Ascending aorta (tissue), 2 donors: ENCODE measurements at regions of chr1 and their contacts with region 1.

Region 1: DNA sequence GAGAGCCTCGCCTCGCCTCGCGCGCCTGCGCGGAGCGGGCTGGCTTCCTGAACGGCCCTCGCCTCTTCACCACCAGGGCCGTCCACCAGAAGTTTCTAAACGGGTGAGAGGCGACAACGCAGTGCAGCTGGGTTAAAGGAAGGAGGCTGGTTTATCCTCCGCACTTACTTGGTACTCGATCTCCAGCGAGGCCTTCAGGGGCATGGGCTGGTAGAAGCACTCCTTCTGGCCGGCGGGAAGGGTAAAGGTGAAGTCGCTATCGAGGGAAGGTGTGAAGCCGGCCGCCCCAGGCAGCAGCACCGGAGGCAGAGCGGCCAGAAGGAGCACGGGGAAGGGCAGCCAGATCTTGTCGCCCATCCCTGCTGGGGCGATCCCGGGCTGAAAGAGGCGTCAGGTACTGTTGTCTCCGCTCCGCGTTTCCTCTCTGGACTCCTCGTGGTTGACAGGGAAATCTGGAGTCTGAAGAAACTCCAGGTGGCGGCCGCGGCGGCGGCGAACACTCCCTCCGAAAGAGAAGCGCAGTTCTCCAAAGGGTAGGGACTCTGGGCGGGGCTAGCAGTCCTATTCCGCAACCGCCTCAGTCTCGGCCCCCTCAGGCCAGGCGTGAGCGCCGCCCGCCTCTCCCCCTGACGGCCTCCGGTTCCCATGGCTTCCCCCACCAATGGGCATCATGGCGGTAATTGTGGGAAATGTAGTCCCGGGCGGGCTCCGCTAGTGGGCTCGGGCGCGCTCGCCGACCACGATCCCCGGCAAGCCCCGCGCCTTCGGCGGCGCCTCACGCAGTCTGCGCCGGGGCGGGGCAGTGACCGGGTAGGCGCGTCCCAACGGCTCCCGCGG is at the start of gene TMED5:
- DNase-seq: peak; percentile 97 to 99
- H3K4me3 ChIP-seq: peak within 1 kb of the TSS; percentile 96
- H3K27ac ChIP-seq: peak within 1 kb of the TSS; percentile 100
- H3K4me1 ChIP-seq: peaks cover 0 to 16% of the 10 kb centered on the region in 2 donors
- H3K27me3 ChIP-seq: no peaks in the 10 kb centered on the region
- CTCF ChIP-seq: peak; percentile 2 to 22 (median 12)
- total RNA-seq, gene TMED5: 39.1 TPM

Region 2: GRCh38 chr1:92831762-92832536 is 348.2 kb before region 1 on chr1 and contains the start of gene RPL5:
- intact Hi-C with region 1: loop called (anchors 10 kb)
- DNase-seq: peak; percentile 81 to 98
- H3K4me3 ChIP-seq: peak within 1 kb of the TSS; percentile 80
- H3K27ac ChIP-seq: peak within 1 kb of the TSS; percentile 85 to 90
- H3K4me1 ChIP-seq: peaks cover 12 to 16% of the 10 kb centered on the region in 2 donors
- H3K27me3 ChIP-seq: no peaks in the 10 kb centered on the region
- CTCF ChIP-seq: peak; percentile 74 to 95 (median 92)
- total RNA-seq, gene RPL5: 617 TPM

Region 3: GRCh38 chr1:93021539-93022134 is 158.5 kb before region 1 on chr1:
- intact Hi-C with region 1: loop called (anchors 10 kb)
- DNase-seq: no peak
- H3K4me3 ChIP-seq: no peak overlapping the region
- H3K27ac ChIP-seq: no peak overlapping the region
- H3K4me1 ChIP-seq: no peaks in the 10 kb centered on the region
- H3K27me3 ChIP-seq: no peaks in the 10 kb centered on the region
- CTCF ChIP-seq: peak; percentile 47 to 63 (median 60)

Region 4: DNA sequence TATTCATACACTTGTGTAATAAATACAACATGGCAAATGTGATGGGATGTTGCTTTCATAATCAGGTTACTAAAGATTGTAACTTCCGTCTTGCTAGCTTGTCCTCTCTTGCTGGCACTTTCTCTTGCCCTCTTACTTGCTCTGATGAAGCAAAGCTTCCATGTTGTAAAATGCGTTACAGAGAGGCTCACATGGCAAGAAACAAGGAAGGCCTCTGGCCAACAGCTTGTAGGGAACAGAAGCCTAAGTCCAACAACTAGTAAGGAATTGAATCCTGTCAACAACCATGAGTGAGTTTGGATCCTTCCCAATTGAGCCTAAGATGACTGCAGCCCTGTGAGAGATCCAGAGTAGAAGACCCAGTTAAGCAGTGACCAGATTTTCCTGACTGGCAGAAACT is 15.3 kb before region 1 on chr1:
- intact Hi-C with region 1: no loop called
- DNase-seq: no peak
- H3K4me3 ChIP-seq: no peak overlapping the region
- H3K27ac ChIP-seq: no peak overlapping the region
- H3K4me1 ChIP-seq: no peaks in the 10 kb centered on the region
- H3K27me3 ChIP-seq: no peaks in the 10 kb centered on the region
- CTCF ChIP-seq: no peak

Region 5: GRCh38 chr1:93345633-93346420 is 165.7 kb after region 1 on chr1 and contains the start of gene DR1:
- intact Hi-C with region 1: loop called (anchors 5 kb)
- DNase-seq: peak; percentile 61 to 96
- H3K4me3 ChIP-seq: peak within 1 kb of the TSS; percentile 98 to 99
- H3K27ac ChIP-seq: peak within 1 kb of the TSS; percentile 95 to 98
- H3K4me1 ChIP-seq: peaks cover 0 to 9% of the 10 kb centered on the region in 2 donors
- H3K27me3 ChIP-seq: no peaks in the 10 kb centered on the region
- CTCF ChIP-seq: no peak
- total RNA-seq, gene DR1: 8.7 TPM

Region 6: GRCh38 chr1:93909146-93910050 is 729.3 kb after region 1 on chr1 and contains the start of gene GCLM:
- intact Hi-C with region 1: loop called (anchors 2 kb)
- DNase-seq: peak; percentile 79 to 97
- H3K4me3 ChIP-seq: peak within 1 kb of the TSS; percentile 92 to 96
- H3K27ac ChIP-seq: peak within 1 kb of the TSS; percentile 82 to 89
- H3K4me1 ChIP-seq: peaks cover 0 to 7% of the 10 kb centered on the region in 2 donors
- H3K27me3 ChIP-seq: no peaks in the 10 kb centered on the region
- CTCF ChIP-seq: peak; percentile 67 to 95 (median 80)
- total RNA-seq, gene GCLM: 3.3 TPM